ENCODE measurements at regions of chr11 and their contacts with region 1.

Region 1: DNA sequence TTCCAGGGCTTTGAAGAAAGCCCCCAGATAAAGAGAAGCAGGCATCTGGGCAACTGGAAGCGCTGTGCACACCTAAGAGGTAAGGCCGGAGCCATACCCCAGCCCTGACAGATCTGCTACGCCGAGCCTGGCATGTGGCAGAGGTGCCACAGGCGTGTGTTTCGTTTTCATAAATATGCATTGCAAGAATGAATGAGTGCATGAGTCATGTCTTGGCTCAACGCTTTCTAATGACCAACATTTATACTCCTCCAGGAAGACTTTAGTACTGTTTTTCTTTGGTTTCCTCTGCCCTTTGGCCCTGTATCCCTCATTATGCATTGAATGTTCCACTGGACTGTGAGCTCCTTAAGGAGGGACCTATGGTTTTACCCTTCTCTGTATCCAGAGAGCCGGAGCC is 38.7 kb upstream of the CSNK2A3 start:
- DNase-seq: no peak

Region 2: DNA sequence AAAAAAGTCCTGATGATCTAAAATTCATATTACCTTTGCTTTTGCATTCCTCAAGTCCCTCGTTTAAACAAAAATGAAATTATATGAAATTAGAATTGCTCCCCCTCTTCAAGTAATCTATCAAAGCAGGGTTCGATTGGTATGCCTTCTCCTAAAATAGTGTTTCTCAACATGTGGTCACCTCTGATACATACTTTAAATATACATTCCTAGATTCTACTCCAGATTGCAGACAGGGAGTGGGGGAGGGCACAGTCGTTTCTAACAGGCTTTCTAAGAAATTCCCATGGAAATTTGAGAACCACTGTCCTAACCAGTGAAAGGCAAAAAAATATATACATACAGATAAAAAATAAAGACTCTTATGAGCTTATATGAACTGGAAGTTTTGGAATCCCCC is 675.7 kb before region 1 on chr11:
- in situ Hi-C with region 1: no loop called
- DNase-seq: no peak

Region 3: GRCh38 chr11:11306855-11307254 is 84.9 kb before region 1 on chr11:
- in situ Hi-C with region 1: no loop called
- DNase-seq: no peak

Region 4: GRCh38 chr11:11510939-11511338 is 119.1 kb after region 1 on chr11:
- in situ Hi-C with region 1: loop called (anchors 25 kb)
- DNase-seq: peak; percentile 50

Measured in SK-MEL-5 (cell line).